ENCODE measurements at regions of chr17 and their contacts with region 1.

Region 1: DNA sequence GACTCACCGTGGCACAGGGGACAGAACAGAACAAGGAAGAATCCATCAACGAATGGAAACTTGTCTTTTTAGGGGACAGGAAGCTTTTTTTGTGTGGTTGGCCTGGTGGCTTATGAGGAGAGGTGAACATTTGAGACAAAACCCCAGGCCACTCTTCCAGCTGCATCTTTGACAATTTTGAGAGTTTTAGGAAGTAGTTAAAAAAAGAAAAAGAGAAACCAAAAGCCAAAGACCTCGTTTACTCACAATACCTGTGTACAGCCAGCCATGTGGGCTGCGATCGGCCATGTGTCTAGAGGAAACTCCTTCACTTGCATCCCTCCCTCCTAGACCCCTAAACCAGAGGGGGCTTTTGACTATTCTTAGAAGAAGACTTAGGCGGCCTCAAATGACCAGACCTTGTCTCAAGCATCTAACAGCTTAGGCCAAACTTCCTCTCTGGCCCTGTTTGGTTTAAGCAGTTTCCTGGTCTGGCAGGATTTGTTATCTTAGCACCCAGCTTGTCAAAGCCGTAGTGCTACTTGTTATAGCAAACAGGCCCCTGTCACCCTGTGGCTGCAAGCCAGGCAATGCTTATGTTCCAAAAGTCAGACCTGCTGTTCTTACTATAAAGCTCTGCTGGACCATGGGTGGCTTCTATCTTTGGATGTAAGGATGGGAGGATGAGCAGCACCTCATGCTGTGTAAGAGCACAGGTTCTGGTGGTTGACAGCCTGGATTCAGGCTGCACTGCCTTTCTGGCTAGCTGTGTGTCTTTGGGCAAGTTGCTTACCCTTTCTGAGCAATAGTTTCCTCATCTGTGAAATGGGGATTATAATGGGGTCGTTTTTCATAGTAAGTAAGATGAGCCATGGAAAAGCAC is 17.7 kb downstream of the KSR1 start:
- DNase-seq: peak; percentile 94
- H3K4me3 Mint-ChIP-seq: peak overlapping the region; percentile 45
- H3K27ac Mint-ChIP-seq: peak overlapping the region; percentile 97
- H3K4me1 Mint-ChIP-seq: peaks cover 93% of the 10 kb centered on the region
- H3K27me3 Mint-ChIP-seq: no peaks in the 10 kb centered on the region

Region 2: DNA sequence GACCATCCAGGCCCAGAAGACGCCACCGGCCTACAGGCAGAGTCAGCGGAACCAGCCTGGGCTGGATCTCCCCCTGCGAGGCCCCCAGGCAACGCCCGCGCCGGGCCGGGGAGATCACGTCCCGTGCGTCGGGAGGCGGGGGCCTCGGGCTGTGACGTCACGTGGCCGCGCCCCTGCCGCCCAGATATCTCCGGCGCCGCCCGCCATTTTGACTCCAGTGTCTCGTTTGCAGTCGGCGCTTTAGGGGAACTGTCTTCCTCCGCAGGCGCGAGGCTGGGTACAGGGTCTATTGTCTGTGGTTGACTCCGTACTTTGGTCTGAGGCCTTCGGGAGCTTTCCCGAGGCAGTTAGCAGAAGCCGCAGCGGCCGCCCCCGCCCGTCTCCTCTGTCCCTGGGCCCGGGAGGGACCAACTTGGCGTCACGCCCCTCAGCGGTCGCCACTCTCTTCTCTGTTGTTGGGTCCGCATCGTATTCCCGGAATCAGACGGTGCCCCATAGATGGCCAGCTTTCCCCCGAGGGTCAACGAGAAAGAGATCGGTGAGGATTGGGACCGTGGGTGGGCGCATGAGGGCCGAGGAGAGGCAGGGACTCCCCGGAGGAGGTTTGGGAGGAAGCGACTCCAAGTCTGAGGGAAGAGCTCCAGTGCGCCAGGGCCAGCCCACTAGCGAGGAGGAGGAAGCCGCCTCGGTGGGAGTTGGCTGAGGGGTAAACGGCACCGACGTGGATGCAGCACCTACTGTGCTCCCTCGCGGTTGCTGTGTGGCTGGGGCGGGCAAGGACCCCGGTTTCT is 179.9 kb before region 1 on chr17 and contains the start of gene WSB1:
- CTCF ChIA-PET with region 1: no interaction called
- intact Hi-C with region 1: loop called (anchors 1 kb)
- DNase-seq: peak; percentile 91
- H3K4me3 Mint-ChIP-seq: peak within 1 kb of the TSS; percentile 96
- H3K27ac Mint-ChIP-seq: peak within 1 kb of the TSS; percentile 99
- H3K4me1 Mint-ChIP-seq: peaks cover 36% of the 10 kb centered on the region
- H3K27me3 Mint-ChIP-seq: no peaks in the 10 kb centered on the region
- total RNA-seq, gene WSB1: 112 to 118 TPM

Region 3: DNA sequence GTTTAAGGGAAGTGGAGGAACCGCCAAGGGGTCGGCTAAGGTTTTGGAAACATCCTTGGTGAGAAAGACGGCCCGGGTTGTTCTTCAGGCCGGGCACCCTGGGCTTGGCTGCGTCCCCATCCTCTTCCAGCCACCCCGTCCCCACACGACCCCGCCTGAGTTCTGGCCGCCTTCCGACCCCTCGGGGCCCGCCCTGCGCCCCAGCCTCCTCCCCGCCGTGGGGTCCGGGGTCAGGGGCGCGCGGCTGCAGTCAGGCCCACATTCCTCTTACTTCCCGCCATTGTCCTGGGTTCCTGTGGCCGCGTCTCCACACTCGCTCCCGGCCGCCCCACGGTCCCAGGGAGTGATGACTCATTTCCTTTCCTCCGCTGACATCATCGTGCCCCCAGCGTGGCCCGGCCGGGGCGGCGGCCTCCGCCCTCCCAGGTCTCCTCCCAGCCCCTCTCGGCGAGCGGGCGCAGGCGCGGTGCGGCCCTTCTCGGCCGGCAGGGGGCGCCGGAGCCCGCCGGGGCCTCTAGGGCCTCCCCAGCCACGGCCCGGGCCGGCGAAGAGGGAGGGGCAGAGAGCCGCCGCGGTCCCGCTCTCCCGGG is 120.4 kb before region 1 on chr17:
- CTCF ChIA-PET with region 1: no interaction called
- intact Hi-C with region 1: no loop called
- DNase-seq: peak; percentile 86
- H3K4me3 Mint-ChIP-seq: peak overlapping the region; percentile 89
- H3K27ac Mint-ChIP-seq: peak overlapping the region; percentile 93
- H3K4me1 Mint-ChIP-seq: peaks cover 23% of the 10 kb centered on the region
- H3K27me3 Mint-ChIP-seq: no peaks in the 10 kb centered on the region

Region 4: DNA sequence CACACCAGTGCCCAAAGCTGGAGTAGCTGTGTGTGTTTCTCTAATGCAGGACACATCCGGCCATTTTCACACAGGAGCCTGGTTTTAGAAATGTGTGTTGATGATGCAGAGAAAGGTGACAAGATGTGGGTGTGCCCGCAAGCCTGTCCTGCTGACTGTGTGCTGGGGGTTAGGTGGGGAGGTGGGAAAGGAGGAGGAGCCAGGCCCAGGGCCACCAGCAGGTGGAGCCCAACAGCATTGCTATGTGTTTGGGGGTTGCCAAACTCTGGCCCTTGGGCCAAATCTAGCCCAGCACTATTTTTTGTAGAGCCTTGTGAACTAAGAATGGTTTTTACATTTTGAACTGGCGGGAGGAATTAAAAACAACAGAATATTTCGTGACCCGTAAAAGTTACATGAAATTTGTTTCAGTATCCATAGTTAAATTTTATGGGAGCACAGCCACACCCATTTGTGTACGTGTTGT is 95.3 kb after region 1 on chr17:
- CTCF ChIA-PET with region 1: no interaction called
- intact Hi-C with region 1: loop called (anchors 1 kb)
- DNase-seq: peak; percentile 71
- H3K4me3 Mint-ChIP-seq: no peak overlapping the region
- H3K27ac Mint-ChIP-seq: peak overlapping the region; percentile 47
- H3K4me1 Mint-ChIP-seq: peaks cover 71% of the 10 kb centered on the region
- H3K27me3 Mint-ChIP-seq: no peaks in the 10 kb centered on the region

Region 5: GRCh38 chr17:27578718-27579085 is 104.7 kb after region 1 on chr17:
- CTCF ChIA-PET with region 1: interaction called, 17 read pairs
- intact Hi-C with region 1: loop called (anchors 1 kb)
- DNase-seq: peak; percentile 93
- H3K4me3 Mint-ChIP-seq: no peak overlapping the region
- H3K27ac Mint-ChIP-seq: peak overlapping the region; percentile 93
- H3K4me1 Mint-ChIP-seq: peaks cover 67% of the 10 kb centered on the region
- H3K27me3 Mint-ChIP-seq: no peaks in the 10 kb centered on the region